WTC11 (cell line): ENCODE measurements at regions of chr16 and their contacts with region 1.

Region 1: DNA sequence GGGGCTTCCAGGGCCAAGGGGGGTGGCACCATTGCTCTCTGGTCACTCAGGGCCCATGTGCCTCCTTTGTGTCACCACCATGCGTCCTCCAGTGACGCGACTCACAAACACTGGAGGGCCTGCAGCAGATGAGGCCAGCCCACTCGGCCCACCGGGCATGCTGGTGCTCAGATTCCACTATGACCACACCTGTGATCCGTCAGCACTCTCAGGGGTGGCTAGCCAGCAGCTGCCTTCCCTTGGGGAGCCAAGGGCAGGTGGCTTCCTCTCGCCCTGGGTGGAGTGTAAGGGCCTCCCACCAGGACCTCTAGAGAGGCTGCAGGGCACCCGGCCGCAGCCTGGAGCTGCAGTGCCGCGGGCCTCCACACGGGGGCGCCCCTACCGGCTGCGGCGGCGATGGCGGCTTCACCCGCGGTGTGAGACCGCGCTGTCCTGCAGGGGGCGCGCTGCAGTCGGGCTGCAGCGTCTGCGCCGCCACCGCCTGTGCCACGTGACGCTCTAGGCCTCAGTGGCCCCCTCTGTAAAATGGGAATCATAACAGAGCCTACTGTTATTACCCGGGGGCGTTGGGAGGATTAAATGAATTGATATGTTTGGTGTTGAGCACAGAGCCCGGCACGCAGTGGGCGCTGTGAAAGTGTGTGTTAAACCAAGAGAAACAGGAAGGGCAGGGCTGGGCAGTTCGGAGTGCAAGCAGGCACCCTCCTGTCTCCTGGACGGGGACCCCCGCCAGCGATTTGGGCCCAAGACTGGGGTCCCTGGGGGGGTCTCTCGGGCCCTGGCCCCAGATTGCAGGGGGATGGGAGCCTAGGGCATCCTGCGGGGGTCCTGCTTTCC is 192.4 kb upstream of the GSE1 start:
- DNase-seq: peak; percentile 73
- ATAC-seq: peak; percentile 27
- H3K4me3 Mint-ChIP-seq: no peak overlapping the region
- H3K27ac Mint-ChIP-seq: no peak overlapping the region
- H3K4me1 Mint-ChIP-seq: peaks cover 26% of the 10 kb centered on the region
- H3K27me3 Mint-ChIP-seq: no peaks in the 10 kb centered on the region
- CTCF ChIP-seq: peak; percentile 100

Region 2: GRCh38 chr16:85017151-85017550 is 403.6 kb before region 1 on chr16:
- CTCF ChIA-PET with region 1: no interaction called
- POLR2A ChIA-PET with region 1: no interaction called
- DNase-seq: no peak
- ATAC-seq: no peak
- H3K4me3 Mint-ChIP-seq: no peak overlapping the region
- H3K27ac Mint-ChIP-seq: no peak overlapping the region
- H3K4me1 Mint-ChIP-seq: no peaks in the 10 kb centered on the region; the same call in 1 of the 2 replicates
- H3K27me3 Mint-ChIP-seq: peaks cover 8% of the 10 kb centered on the region; the same call in 1 of the 2 replicates
- CTCF ChIP-seq: no peak

Region 3: DNA sequence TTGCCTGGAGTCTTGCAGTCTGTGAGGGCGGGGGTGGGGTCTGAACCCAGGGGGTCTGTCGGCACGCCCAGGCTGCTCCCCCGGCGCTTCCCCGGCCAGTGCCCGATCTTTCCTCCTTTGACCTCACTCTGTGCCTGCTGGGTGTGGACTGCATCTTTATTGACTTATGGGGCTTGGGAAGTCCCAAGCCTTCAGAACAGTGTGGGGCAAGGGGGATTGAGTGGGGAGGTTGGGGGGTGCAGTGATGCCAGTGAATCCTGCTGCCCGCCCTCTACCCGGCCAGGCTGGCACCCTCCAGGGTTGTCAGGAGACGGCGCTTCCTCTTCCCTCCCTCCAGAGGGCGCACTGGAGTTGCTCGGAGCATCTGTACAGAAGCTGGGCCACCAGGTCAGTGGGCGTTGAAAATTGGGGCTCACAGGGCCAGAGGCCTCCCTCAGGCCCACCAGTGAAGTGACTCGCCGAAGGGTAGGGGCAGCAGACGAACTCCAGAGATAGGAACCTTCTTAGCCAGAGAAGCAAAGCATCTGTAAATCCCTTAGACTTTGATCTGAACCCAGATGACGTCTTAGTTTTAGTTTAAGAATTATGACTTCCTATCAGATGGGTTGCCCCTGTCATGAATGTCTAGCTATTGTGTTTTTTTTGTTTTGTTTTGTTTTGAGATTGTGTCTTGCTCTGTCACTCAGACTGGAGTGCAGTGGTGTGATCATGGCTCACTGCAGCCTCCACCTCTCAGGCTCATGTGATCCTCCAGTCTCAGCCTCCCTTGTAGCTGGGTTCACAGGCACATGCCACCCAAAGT is 123.7 kb before region 1 on chr16:
- CTCF ChIA-PET with region 1: interaction called, 12 read pairs
- POLR2A ChIA-PET with region 1: no interaction called
- DNase-seq: peak; percentile 78
- ATAC-seq: peak; percentile 93
- H3K4me3 Mint-ChIP-seq: no peak overlapping the region
- H3K27ac Mint-ChIP-seq: no peak overlapping the region
- H3K4me1 Mint-ChIP-seq: peaks cover 17% of the 10 kb centered on the region
- H3K27me3 Mint-ChIP-seq: no peaks in the 10 kb centered on the region
- CTCF ChIP-seq: peak; percentile 71

Region 4: GRCh38 chr16:85363881-85364280 is 56.8 kb before region 1 on chr16:
- CTCF ChIA-PET with region 1: interaction called, 18 read pairs
- POLR2A ChIA-PET with region 1: no interaction called
- DNase-seq: no peak
- ATAC-seq: no peak
- H3K4me3 Mint-ChIP-seq: no peak overlapping the region
- H3K27ac Mint-ChIP-seq: no peak overlapping the region
- H3K4me1 Mint-ChIP-seq: peaks cover 23% of the 10 kb centered on the region
- H3K27me3 Mint-ChIP-seq: peaks cover 9% of the 10 kb centered on the region
- CTCF ChIP-seq: no peak

Region 5: GRCh38 chr16:85393674-85394483 is 26.8 kb before region 1 on chr16:
- CTCF ChIA-PET with region 1: interaction called, 229 read pairs
- POLR2A ChIA-PET with region 1: interaction called, 4 read pairs
- DNase-seq: peak; percentile 89
- ATAC-seq: peak; percentile 68
- H3K4me3 Mint-ChIP-seq: peak overlapping the region; percentile 38
- H3K27ac Mint-ChIP-seq: no peak overlapping the region
- H3K4me1 Mint-ChIP-seq: peaks cover 43% of the 10 kb centered on the region
- H3K27me3 Mint-ChIP-seq: no peaks in the 10 kb centered on the region
- CTCF ChIP-seq: peak; percentile 94

Region 6: DNA sequence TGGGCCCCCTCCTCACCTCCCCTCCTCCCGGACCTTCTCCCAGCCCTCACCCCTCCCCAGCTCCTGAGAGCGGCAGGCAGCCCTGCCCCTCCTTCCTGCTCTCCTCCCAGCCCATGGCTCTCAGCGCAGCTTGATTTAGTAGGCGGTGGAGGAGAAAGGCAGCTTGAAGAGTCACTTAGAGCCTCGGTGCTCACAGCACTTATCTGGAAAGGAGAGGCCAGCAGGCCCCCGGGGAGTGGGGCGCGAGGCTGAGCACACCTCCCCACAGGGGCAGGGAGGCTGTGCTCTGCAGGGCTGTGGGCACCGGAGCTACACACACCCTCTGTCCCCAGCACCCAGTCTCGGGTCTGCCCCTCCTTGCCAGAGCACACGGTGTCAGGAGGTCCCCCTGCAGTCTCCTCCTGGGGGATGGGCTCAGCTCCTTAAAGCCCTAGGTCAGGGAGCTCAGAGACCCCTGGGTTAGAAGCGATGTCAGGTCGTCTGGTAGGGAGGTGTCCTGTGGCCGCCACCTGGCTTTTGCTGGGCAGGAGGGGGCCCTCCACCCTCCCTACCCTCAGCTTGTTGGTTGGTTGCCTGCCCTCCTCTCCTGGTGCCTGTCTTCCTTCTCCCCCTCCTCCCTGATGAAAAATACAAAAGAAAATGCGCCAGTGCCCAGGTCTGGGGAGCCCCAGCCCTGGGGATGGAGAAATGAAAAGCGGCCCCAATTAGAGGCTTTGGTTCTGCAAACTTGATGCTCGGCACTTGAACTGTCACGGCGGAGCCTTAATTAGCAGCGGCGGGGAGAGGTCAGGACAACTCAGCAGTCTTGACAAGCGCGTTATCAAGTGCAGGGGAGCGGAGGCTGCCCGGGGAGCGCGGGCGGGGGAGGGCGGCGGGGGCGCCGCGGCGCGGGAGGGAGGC is 41.3 kb after region 1 on chr16:
- CTCF ChIA-PET with region 1: interaction called, 30 read pairs
- POLR2A ChIA-PET with region 1: interaction called, 3 read pairs
- DNase-seq: peak; percentile 73
- ATAC-seq: peak; percentile 77
- H3K4me3 Mint-ChIP-seq: peak overlapping the region; percentile 76
- H3K27ac Mint-ChIP-seq: no peak overlapping the region
- H3K4me1 Mint-ChIP-seq: peaks cover 32% of the 10 kb centered on the region
- H3K27me3 Mint-ChIP-seq: peaks cover 60% of the 10 kb centered on the region
- CTCF ChIP-seq: no peak

Region 7: GRCh38 chr16:85528528-85529387 is 108.0 kb after region 1 on chr16:
- CTCF ChIA-PET with region 1: interaction called, 12 read pairs
- POLR2A ChIA-PET with region 1: no interaction called
- DNase-seq: no peak
- ATAC-seq: no peak
- H3K4me3 Mint-ChIP-seq: no peak overlapping the region
- H3K27ac Mint-ChIP-seq: peak overlapping the region; percentile 53; the same call in 1 of the 2 replicates
- H3K4me1 Mint-ChIP-seq: peaks cover 32% of the 10 kb centered on the region
- H3K27me3 Mint-ChIP-seq: no peaks in the 10 kb centered on the region
- CTCF ChIP-seq: peak; percentile 38; the same call in 1 of the 2 replicates

Region 8: GRCh38 chr16:85626191-85626981 is 205.7 kb after region 1 on chr16:
- CTCF ChIA-PET with region 1: interaction called, 18 read pairs
- POLR2A ChIA-PET with region 1: no interaction called
- DNase-seq: peak; percentile 64
- ATAC-seq: peak; percentile 50
- H3K4me3 Mint-ChIP-seq: peak overlapping the region; percentile 53
- H3K27ac Mint-ChIP-seq: peak overlapping the region; percentile 70
- H3K4me1 Mint-ChIP-seq: peaks cover 50% of the 10 kb centered on the region
- H3K27me3 Mint-ChIP-seq: no peaks in the 10 kb centered on the region
- CTCF ChIP-seq: no peak